ENCODE measurements at regions of chr17 and their contacts with region 1.

Region 1: DNA sequence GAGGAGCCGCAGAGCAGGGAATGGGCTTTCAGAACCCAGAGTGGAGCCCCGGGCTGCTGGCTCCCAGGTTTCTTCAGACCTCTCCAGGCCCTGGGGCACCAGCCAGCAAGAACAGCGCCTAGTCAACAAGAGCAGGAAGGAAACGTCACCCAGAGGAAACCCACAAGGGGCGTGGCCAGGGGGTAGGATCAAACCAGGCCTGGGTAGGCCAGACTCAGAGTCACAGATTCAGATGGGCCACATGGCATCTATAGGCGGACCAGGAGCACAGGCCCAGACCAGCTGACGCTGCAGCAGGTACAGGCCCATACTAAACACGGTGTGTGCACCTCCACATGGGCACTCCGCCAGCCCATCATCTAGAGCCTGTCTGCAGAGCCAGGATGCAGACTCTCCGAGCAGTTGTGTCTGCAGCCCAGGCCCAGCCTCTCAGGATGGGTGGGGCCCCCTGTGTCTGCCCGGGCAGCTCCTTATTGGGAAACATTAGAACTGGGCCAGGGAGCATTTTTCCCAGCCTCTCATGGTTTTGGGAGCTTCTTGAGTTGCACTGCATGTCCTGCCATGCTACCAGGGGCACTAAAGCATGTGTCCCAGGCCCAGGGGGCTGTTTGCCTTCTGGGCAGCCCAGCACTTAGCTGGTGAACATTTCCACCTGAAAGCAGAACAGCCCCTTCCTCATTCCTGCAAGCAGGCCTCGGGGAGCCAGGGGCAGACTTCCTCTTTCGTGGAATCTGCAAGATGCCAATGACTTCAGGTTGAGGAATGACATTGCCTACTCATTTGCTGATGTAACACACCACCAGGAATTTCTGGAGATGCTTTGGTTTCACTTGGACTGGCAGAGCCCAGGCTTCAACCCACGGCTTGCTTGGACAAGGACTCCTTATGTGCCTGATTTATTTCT is at the start of gene NLRP1:
- DNase-seq: peak; percentile 87
- ATAC-seq: peak; percentile 82
- total RNA-seq, gene NLRP1: 3.3 to 8.6 TPM

Region 2: DNA sequence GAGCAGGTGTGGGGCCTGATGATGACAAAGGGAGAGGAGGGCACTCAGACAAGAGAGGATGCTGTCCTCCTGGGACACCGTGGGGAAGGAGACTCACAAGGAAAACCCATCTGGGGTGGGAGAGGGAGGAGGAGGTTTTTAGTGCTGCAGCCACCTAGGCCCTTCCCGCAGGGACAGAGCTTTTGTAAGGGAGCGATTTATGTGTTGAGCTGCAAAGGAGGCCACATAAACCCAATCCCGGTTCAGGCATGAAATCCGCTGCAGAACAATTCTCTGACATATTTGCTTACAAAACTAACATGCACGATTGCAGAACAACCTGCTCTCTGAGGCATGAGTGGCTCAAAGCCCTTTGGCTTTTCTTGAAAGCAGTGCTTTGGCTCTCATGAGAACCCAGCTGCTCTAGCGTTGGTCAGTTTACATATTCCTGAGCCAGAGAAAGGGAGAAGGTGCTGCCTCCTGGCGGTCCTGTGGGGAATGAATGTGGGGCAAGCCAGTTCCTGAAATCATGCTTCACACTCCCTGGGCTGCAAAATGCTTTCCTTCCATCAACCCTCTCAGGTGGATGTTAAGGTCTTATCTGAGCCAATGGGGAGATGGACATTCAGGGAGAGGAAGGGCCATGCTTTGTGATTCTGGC is 122.1 kb after region 1 on chr17:
- intact Hi-C with region 1: loop called in 1 of 2 experiments (anchors 10 kb)
- DNase-seq: peak; percentile 34 to 64
- ATAC-seq: peak; percentile 61

Region 3: GRCh38 chr17:6425407-6425806 is 840.8 kb after region 1 on chr17:
- intact Hi-C with region 1: loop called in 1 of 2 experiments (anchors 2 kb)
- DNase-seq: no peak
- ATAC-seq: no peak

Measured in left colon (tissue), 2 donors.